GM10248 (cell line): ENCODE measurements at regions of chr11 and their contacts with region 1.

Region 1: GRCh38 chr11:67382276-67383136 is 9.1 kb upstream of the CLCF1 start:
- DNase-seq: peak; percentile 86
- CTCF ChIP-seq: peak; percentile 94

Region 2: DNA sequence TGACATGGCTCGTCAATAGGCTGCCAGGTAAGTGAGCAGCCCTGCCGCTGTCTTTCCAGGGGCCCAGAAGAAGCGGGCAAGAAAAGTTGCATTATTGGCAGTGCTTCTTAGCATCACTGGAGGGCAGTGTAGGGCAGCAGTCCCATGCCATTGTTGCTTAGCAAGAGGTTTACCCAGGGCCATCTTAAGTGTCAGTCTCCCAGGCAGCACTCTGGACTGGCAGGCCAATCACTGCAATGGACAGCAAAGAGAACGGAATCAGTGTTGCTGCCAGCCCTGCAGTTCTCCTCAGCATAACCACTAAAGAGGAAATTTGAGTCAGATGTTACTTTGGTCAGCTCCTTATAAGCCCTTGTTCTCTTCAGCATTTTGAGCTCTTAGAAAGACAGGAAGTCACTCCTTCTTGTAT is 129.7 kb before region 1 on chr11:
- CTCF ChIA-PET with region 1: interaction called, 12 read pairs
- POLR2A ChIA-PET with region 1: no interaction called
- DNase-seq: no peak
- CTCF ChIP-seq: peak; percentile 23

Region 3: GRCh38 chr11:67317205-67317887 is 65.2 kb before region 1 on chr11:
- CTCF ChIA-PET with region 1: interaction called, 41 read pairs
- POLR2A ChIA-PET with region 1: no interaction called
- DNase-seq: peak; percentile 100
- CTCF ChIP-seq: peak; percentile 91

Region 4: DNA sequence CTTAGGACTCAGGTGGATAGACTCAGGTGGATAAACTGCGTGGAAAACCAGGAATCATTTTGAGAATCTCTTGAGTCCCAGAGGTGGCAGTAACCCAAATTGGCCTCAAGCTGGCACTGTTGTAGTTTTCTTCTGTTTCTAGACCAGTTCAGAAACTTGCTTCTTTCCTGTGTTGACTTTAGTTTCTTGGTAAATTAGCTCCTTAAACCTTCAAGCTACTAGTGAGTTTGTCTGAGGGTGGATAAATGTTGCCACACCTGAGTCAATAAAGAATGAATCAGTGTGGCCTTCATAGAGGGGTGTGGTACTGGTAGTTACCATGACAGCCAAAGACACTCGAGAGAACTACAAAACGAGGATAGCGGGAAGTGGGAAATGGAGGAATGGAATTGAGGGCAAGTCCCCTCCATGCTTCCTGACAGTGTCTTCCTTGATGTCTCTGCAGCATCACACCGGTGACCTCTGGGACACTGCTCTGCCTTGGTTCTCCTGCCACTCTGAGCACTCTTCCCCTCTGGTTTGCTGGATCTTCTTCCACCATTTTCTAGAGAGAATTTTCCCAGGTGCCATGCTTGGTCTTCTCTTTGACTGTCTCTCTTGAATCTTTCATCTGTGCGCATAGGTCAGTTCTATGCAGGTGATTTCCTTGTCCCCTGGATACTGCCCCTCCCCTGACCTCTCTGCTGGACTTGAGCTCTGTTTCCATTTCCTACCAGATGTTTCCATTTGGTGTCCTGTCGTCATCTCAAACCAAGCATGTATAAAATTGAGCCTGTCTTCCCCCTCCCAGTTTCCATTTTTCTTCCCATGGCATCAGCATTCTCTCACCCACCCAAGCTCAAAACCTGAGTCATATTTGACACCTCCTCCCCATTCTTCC is 36.3 kb before region 1 on chr11:
- CTCF ChIA-PET with region 1: interaction called, 1,573 read pairs
- POLR2A ChIA-PET with region 1: interaction called, 22 read pairs
- DNase-seq: no peak
- CTCF ChIP-seq: peak; percentile 66

Region 5: DNA sequence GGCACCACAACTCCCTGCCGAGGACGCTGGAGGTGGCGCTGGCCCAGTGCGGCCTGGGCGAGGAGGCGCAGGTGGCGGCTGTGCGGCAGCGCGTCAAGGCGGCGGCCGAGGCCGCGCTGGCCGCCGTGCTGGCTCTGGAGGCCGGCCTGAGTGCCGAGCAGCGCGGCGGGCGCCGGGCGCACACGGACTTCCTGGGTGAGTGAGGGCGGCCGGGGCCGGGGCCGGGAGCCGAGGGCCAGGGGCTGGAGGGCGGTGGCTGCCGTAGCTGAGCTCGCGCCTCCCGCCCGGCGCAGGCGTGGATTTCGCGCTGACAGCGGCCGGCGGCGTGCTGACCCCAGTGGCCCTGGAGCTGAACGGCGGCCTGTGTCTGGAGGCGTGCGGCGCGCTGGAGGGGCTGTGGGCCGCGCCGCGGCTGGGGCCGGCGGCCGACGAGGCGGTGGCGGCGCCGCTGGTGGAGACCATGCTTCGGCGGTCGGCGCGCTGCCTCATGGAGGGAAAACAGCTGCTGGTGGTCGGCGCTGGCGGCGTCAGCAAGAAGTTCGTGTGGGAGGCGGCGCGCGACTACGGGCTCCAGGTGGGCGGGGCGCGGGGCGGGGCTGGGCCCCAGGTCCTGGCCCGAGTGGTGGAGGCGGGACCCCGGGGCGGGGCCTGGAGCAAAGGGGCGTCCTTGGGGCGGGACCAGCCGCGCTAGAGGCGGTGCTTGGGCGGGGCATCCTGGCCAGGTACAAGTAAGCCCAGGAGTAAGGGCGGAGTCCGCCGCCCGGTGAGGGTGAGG is 38.3 kb after region 1 on chr11:
- CTCF ChIA-PET with region 1: interaction called, 19 read pairs
- POLR2A ChIA-PET with region 1: no interaction called
- DNase-seq: peak; percentile 99
- CTCF ChIP-seq: no peak